ENCODE measurements at regions of chr2 and their contacts with region 1.

Region 1: DNA sequence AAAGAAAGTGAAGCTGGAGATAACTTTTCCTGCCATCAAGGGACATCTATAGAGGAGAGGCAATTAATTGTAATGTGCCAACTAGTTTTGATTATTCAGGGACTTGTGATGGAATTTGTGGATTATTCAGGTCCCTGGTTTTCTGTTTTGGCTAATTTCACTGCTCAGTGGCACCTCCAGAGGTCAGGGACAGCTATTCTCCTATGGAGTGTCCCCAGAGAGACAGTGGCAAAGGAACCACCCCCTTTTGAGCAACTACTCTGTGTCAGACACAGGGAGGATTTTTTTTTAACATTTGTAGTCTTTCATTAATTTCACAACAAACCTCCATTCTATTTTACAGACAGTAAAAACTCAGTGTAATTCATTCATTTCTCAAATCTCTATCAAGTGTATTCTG is 206.0 kb upstream of the SPRED2 start:
- DNase-seq: no peak
- ATAC-seq: no peak
- H3K4me3 ChIP-seq: no peak overlapping the region
- H3K27ac ChIP-seq: no peak overlapping the region
- H3K4me1 ChIP-seq: peaks cover 0 to 5% of the 10 kb centered on the region in 2 donors
- H3K27me3 ChIP-seq: peaks cover 0 to 3% (median 0%) of the 10 kb centered on the region in 3 donors
- CTCF ChIP-seq: no peak
- POLR2A ChIP-seq: no peak

Region 2: DNA sequence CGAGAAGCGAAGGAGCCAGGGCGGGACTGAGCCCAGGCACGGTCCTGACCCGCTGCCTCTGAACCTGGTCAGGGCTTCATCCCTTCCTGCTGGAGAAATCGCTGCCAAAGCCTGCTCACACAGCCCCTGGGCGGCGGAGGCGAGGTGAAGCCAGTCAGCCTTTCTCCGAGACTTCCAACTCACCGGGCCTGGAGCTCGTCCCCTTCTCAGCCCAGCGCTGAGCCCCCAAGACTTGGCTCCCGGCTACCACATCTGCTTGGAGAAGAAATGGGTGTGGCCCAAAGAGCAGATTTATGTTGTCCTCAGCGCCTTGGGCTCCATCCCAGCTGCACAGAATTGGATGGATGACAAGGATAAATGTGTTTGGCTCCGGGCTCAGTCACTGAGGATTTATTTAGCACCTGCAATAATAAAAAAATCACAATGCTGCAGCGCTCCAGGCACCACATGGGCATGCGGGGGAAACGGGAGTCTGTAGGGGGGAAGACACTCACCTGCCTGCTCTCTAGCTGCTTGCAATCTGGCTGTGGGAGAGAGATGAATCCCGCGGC is 345.9 kb before region 1 on chr2:
- in situ Hi-C with region 1: no loop called
- intact Hi-C with region 1: no loop called
- DNase-seq: peak in 1 of 2 donors; percentile 46
- ATAC-seq: peak; percentile 19 to 37
- H3K4me3 ChIP-seq: no peak overlapping the region
- H3K27ac ChIP-seq: no peak overlapping the region
- H3K4me1 ChIP-seq: peaks cover 8 to 15% of the 10 kb centered on the region in 2 donors
- H3K27me3 ChIP-seq: no peaks in the 10 kb centered on the region
- CTCF ChIP-seq: no peak
- POLR2A ChIP-seq: no peak

Region 3: GRCh38 chr2:65710779-65711295 is 72.4 kb after region 1 on chr2:
- in situ Hi-C with region 1: no loop called
- intact Hi-C with region 1: loop called (anchors 5 kb)
- DNase-seq: no peak
- ATAC-seq: peak in 1 of 2 donors; percentile 30
- H3K4me3 ChIP-seq: no peak overlapping the region
- H3K27ac ChIP-seq: no peak overlapping the region
- H3K4me1 ChIP-seq: peaks cover 0 to 4% of the 10 kb centered on the region in 2 donors
- H3K27me3 ChIP-seq: no peaks in the 10 kb centered on the region
- CTCF ChIP-seq: no peak
- POLR2A ChIP-seq: no peak

Region 4: GRCh38 chr2:65800998-65801397 is 162.6 kb after region 1 on chr2:
- in situ Hi-C with region 1: no loop called
- intact Hi-C with region 1: loop called (anchors 5 kb)
- DNase-seq: no peak
- ATAC-seq: no peak
- H3K4me3 ChIP-seq: no peak overlapping the region
- H3K27ac ChIP-seq: no peak overlapping the region
- H3K4me1 ChIP-seq: no peaks in the 10 kb centered on the region
- H3K27me3 ChIP-seq: no peaks in the 10 kb centered on the region
- CTCF ChIP-seq: peak in 4 of 5 experiments; percentile 21 to 48 (median 30)
- POLR2A ChIP-seq: no peak

Region 5: DNA sequence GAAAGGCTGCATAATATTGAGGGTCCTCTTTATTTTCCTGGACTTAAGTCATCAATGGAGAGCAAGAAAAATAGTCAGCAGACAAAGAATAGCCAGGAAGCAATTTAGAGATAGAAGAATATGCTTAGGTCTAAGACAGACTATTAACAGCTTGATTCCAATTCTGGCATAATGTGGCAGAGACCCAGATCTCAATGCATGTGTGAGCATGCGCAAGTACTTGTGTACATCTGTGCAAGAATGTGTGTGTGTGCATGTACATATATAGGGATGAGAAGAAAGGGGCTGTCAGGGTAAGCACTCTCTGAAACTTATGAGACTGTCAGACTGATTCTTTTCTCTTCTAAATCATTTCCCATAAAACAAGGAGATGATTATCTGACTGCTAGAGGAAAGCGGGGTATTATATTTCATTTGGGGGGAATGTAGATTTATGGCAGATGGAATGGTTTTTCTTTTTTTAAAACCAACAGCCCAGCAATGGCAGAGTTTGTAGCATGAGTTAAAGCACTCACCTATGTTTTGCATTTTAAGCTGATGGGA is 175.3 kb after region 1 on chr2:
- in situ Hi-C with region 1: no loop called
- intact Hi-C with region 1: no loop called
- DNase-seq: no peak
- ATAC-seq: no peak
- H3K4me3 ChIP-seq: no peak overlapping the region
- H3K27ac ChIP-seq: no peak overlapping the region
- H3K4me1 ChIP-seq: no peaks in the 10 kb centered on the region
- H3K27me3 ChIP-seq: no peaks in the 10 kb centered on the region
- CTCF ChIP-seq: no peak
- POLR2A ChIP-seq: no peak

Measured in gastrocnemius medialis (tissue), 4 donors.